ENCODE measurements at regions of chr5 and their contacts with region 1.

Region 1: GRCh38 chr5:95619514-95620029 is 315 bp upstream of the GPR150 start:
- DNase-seq: no peak
- ATAC-seq: peak; percentile 16; the same call in 2 of the 3 replicates
- H3K4me3 ChIP-seq: peak overlapping the region; percentile 39 to 74 (median 43)
- H3K27ac ChIP-seq: no peak overlapping the region
- H3K4me1 ChIP-seq: peaks cover 25% of the 10 kb centered on the region
- H3K27me3 ChIP-seq: peaks cover 7 to 59% of the 10 kb centered on the region in 2 experiments
- CTCF ChIP-seq: no peak
- EP300 ChIP-seq: no peak
- POLR2A ChIP-seq: no peak
- RAD21 ChIP-seq: no peak

Region 2: GRCh38 chr5:95554647-95555548 is 64.7 kb before region 1 on chr5 and contains the starts of genes ARSK and SKIC3:
- CTCF ChIA-PET with region 1: no interaction called
- POLR2A ChIA-PET with region 1: no interaction called
- in situ Hi-C with region 1: no loop called
- intact Hi-C with region 1: loop called (anchors 5 kb)
- DNase-seq: peak; percentile 97
- ATAC-seq: peak; percentile 97
- H3K4me3 ChIP-seq: peak within 1 kb of the TSS; percentile 80 to 92 (median 85)
- H3K27ac ChIP-seq: peak within 1 kb of the TSS; percentile 92
- H3K4me1 ChIP-seq: peaks cover 32% of the 10 kb centered on the region
- H3K27me3 ChIP-seq: no peaks in the 10 kb centered on the region; a peak in 1 of 5 replicates
- CTCF ChIP-seq: peak; percentile 51
- EP300 ChIP-seq: no peak
- POLR2A ChIP-seq: peak; percentile 80 to 84; a peak in 3 of 4 replicates
- RAD21 ChIP-seq: peak; percentile 60; the same call in 1 of the 2 replicates
- total RNA-seq, gene ARSK: 5.9 and 7.9 TPM in 2 replicates
- total RNA-seq, gene SKIC3: 61.5 and 86.9 TPM in 2 replicates

Region 3: GRCh38 chr5:95664204-95664786 is 44.7 kb after region 1 on chr5:
- CTCF ChIA-PET with region 1: no interaction called
- POLR2A ChIA-PET with region 1: no interaction called
- in situ Hi-C with region 1: no loop called
- intact Hi-C with region 1: no loop called
- DNase-seq: peak; percentile 25
- ATAC-seq: peak; percentile 43; the same call in 1 of the 3 replicates
- H3K4me3 ChIP-seq: no peak overlapping the region
- H3K27ac ChIP-seq: no peak overlapping the region
- H3K4me1 ChIP-seq: peaks cover 6% of the 10 kb centered on the region; the same call in 1 of the 2 replicates
- H3K27me3 ChIP-seq: no peaks in the 10 kb centered on the region
- CTCF ChIP-seq: peak; percentile 68
- EP300 ChIP-seq: no peak
- POLR2A ChIP-seq: no peak
- RAD21 ChIP-seq: peak; percentile 33; the same call in 1 of the 2 replicates

Region 4: DNA sequence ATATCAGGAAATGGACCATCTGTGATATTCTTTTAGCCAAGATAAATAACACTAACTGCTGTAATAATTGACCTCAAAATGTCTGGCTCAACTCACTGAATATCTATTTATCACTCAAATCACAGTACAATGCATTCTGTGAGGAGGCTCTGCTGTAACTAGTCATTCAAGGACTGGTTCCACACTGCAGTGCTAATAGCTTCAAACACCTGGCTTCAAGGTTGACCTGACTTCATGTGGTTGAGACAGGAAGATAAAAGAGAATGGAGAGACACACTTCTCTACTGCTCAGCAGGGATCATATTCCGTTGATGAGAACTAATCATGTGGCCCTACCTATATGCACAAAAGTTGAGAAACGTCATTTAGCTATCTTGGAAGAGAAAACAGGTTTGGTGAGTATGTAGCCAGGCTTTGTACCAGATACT is 108.2 kb after region 1 on chr5:
- CTCF ChIA-PET with region 1: no interaction called
- POLR2A ChIA-PET with region 1: no interaction called
- in situ Hi-C with region 1: no loop called
- intact Hi-C with region 1: no loop called
- DNase-seq: peak; percentile 18
- ATAC-seq: no peak
- H3K4me3 ChIP-seq: no peak overlapping the region
- H3K27ac ChIP-seq: no peak overlapping the region
- H3K4me1 ChIP-seq: peaks cover 44% of the 10 kb centered on the region
- H3K27me3 ChIP-seq: no peaks in the 10 kb centered on the region; a peak in 1 of 5 replicates
- CTCF ChIP-seq: no peak
- EP300 ChIP-seq: no peak
- POLR2A ChIP-seq: no peak
- RAD21 ChIP-seq: no peak

Region 5: GRCh38 chr5:95738072-95738471 is 118.5 kb after region 1 on chr5:
- CTCF ChIA-PET with region 1: no interaction called
- POLR2A ChIA-PET with region 1: no interaction called
- in situ Hi-C with region 1: no loop called
- intact Hi-C with region 1: no loop called
- DNase-seq: no peak
- ATAC-seq: no peak
- H3K4me3 ChIP-seq: no peak overlapping the region
- H3K27ac ChIP-seq: no peak overlapping the region
- H3K4me1 ChIP-seq: peaks cover 25% of the 10 kb centered on the region
- H3K27me3 ChIP-seq: no peaks in the 10 kb centered on the region
- CTCF ChIP-seq: no peak
- EP300 ChIP-seq: no peak
- POLR2A ChIP-seq: no peak
- RAD21 ChIP-seq: no peak